T-cell (primary cell): ENCODE measurements at regions of chr10 and their contacts with region 1.

Region 1: DNA sequence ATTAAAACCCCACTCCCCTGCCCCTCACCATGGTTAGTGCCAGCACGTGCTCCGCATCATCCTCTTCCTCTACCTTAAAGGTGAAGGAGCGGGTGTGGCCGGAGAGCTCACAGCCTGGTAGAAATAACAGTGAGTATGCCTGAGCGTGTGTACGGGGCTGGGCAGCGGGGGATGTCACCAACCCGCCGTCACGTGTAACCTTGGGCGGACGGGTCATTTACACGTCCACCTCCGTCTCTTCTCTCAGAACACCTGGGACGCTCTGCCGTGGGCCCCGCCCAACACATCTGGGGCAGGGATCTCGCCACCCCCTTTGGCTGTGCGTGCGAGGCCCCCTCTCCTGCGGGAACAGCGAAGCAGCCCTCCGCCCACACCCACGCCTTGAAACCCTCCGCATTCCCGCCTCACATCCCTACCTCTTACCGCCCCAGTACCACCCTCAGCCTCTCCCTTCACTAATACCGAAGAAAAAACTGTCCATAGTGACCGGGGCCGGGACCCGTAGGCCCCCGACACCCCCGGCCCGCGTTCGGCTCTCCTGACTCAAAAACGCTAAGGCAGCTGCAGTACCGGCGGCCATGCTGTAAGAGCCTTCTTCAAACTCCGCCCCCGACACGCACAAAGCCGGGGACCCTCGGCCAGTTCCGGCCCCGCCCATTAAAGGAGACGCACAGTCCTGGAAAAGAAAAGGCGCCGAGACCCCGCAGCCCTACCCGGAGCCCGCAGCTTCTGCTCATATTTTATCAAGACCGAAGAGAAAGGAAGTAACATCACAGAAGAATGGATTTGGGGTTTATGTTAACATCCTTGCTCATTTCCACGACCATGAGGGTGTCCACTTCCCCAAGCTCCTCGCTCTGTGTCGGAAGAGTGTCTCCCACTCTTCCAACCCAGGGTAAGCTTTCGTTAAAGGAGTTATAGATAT is at the start of gene NPM3:
- DNase-seq: peak; percentile 59 to 83 (median 75)
- ATAC-seq: peak; percentile 78 to 80 (median 79)
- H3K4me3 ChIP-seq: peak within 1 kb of the TSS; percentile 67 to 95
- H3K4me3 Mint-ChIP-seq: peak within 1 kb of the TSS; percentile 97 to 100 (median 100)
- H3K27ac ChIP-seq: peak within 1 kb of the TSS; percentile 68
- H3K27ac Mint-ChIP-seq: peak within 1 kb of the TSS; percentile 94
- H3K4me1 ChIP-seq: peaks cover 27 to 55% of the 10 kb centered on the region in 2 experiments
- H3K4me1 Mint-ChIP-seq: peaks cover 63 to 73% (median 71%) of the 10 kb centered on the region in 3 donors
- H3K27me3 ChIP-seq: peaks cover 3 to 24% of the 10 kb centered on the region in 2 experiments
- H3K27me3 Mint-ChIP-seq: peaks cover 9% of the 10 kb centered on the region in 2 donors
- total RNA-seq, gene NPM3: 13.1 to 29.7 (median 26.0) TPM

Region 2: DNA sequence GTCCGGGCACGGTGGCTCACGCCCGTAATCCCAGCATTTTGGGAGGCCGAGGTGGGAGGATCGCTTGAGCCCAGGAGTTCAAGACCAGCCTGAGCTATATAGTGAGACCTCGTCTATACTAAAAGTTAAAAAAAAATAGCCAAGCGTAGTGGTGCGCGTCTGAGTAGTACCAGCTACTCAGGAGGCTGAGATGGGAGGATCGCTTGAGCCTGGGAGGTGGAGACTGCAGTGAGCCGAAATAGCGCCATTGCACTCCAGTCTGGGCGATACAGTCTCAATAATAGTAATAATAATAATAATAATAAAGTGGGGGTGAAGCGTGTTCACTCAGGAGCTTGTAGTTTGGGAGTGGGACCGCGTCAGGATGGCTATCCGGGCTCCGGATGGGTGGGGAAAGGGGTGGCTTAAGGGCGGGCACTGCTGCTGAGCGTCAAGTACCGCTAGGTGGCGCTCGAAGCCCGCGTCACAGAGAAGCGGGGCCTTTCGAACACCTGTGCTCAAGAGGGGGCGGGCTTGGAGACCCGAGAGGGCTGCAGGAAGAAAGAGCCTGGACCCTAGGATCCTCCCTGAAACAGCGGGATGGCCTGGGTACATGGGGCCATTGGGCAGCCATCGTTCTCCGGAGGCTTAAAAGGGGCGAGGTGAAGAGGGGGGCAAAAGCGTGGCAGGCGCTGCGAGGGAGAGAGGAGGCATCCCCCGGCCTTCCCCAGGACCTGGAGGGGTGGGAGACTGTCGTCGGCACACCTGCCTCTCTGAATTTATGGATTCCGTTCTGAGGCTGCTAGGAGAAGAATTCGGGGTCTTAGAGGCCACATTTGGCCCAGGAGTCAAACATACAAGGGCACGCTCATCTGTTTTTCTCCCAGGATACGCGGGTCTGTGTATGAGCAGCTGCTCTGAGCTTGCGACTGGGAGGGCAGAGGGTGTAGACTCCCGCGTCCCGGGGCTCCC is 568.4 kb before region 1 on chr10:
- CTCF ChIA-PET with region 1: interaction called in 1 of 2 experiments, 14 read pairs
- POLR2A ChIA-PET with region 1: no interaction called
- DNase-seq: peak; percentile 19 to 87 (median 64)
- ATAC-seq: peak; percentile 79 to 87 (median 81)
- H3K4me3 ChIP-seq: peak overlapping the region in 1 of 2 donors; percentile 17
- H3K4me3 Mint-ChIP-seq: peak overlapping the region; percentile 49 to 70 (median 55)
- H3K27ac ChIP-seq: no peak overlapping the region
- H3K27ac Mint-ChIP-seq: peak overlapping the region in 1 of 2 donors; percentile 66
- H3K4me1 ChIP-seq: peaks cover 5 to 53% of the 10 kb centered on the region in 2 experiments
- H3K4me1 Mint-ChIP-seq: peaks cover 37 to 41% (median 40%) of the 10 kb centered on the region in 3 donors
- H3K27me3 ChIP-seq: peaks cover 26 to 95% of the 10 kb centered on the region in 2 experiments
- H3K27me3 Mint-ChIP-seq: peaks cover 68 to 92% of the 10 kb centered on the region in 2 donors

Region 3: DNA sequence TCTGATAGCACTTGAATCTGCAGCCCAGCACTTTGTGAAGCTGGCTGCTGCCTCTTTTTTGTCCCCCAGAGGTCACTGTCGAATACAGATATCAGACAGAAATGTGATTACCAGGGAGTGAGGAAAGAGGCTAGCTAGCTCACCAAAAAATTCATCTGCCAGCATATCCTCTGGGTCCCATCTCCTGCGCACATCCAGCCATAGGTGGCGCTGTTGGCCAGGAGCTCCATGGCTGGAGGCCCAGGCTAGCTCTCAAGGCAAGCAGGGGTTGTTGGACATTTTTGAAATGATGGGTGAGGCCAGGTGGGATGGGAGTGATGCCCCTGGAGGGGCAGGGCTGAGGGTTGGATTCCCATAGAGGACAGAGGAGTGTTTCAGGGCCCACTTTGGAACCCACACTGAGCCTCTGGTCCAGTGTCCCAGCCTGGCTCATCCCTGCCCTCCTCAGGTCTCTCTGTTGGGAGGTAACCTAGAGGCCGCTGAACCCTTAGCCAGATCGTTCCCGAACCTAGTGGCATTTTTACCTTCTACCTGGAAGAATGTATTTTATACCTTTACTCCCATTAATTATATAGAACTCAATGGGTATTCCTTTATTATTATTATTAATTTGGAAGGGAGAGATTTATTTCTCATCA is 180.2 kb before region 1 on chr10:
- CTCF ChIA-PET with region 1: interaction called in 1 of 2 experiments, 12 read pairs
- POLR2A ChIA-PET with region 1: no interaction called
- DNase-seq: peak in 32 of 35 experiments; percentile 13 to 67 (median 42)
- ATAC-seq: peak; percentile 52 to 79 (median 68)
- H3K4me3 ChIP-seq: no peak overlapping the region
- H3K4me3 Mint-ChIP-seq: no peak overlapping the region
- H3K27ac ChIP-seq: no peak overlapping the region
- H3K27ac Mint-ChIP-seq: no peak overlapping the region
- H3K4me1 ChIP-seq: no peaks in the 10 kb centered on the region
- H3K4me1 Mint-ChIP-seq: no peaks in the 10 kb centered on the region
- H3K27me3 ChIP-seq: no peaks in the 10 kb centered on the region
- H3K27me3 Mint-ChIP-seq: no peaks in the 10 kb centered on the region

Region 4: DNA sequence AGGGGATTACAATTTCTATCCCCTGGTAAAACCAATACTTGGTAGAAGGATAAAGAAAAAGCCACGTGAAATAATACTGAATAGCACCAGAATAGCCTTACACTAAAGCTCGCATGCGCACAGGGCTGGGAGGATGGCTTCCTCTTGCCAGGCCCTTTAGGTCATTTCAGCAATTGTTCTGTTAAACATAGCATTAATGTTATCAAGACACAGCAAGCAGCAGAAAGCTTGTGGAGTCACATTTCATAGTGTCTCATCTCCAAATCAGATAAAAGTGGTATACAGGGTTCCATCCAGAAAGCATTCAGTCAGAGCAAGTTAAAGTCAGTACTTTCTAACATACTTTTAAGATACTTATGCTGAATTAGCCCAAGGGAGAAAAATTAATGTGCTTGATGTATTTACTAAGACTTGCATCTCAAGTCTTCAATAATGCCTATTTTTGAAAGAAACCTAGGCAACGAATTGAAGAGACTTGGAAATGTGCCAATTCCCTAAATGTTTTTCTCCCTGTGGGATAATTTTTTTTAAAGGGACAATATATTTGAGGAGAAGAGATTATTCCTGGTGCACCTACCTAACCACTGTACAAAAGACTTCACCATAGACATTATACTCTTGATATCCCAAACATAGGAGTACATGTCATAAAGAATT is 14.5 kb after region 1 on chr10:
- CTCF ChIA-PET with region 1: interaction called, 4 to 11 read pairs
- POLR2A ChIA-PET with region 1: interaction called, 6 to 10 read pairs
- DNase-seq: no peak
- ATAC-seq: no peak
- H3K4me3 ChIP-seq: no peak overlapping the region
- H3K4me3 Mint-ChIP-seq: no peak overlapping the region
- H3K27ac ChIP-seq: no peak overlapping the region
- H3K27ac Mint-ChIP-seq: no peak overlapping the region
- H3K4me1 ChIP-seq: peaks cover 0 to 15% of the 10 kb centered on the region in 2 experiments
- H3K4me1 Mint-ChIP-seq: peaks cover 38 to 48% (median 41%) of the 10 kb centered on the region in 3 donors
- H3K27me3 ChIP-seq: no peaks in the 10 kb centered on the region
- H3K27me3 Mint-ChIP-seq: no peaks in the 10 kb centered on the region

Region 5: GRCh38 chr10:101807158-101807557 is 24.1 kb after region 1 on chr10:
- CTCF ChIA-PET with region 1: interaction called in 1 of 2 experiments, 12 read pairs
- POLR2A ChIA-PET with region 1: no interaction called
- DNase-seq: no peak
- ATAC-seq: no peak
- H3K4me3 ChIP-seq: no peak overlapping the region
- H3K4me3 Mint-ChIP-seq: no peak overlapping the region
- H3K27ac ChIP-seq: no peak overlapping the region
- H3K27ac Mint-ChIP-seq: peak overlapping the region in 1 of 2 donors; percentile 36
- H3K4me1 ChIP-seq: peaks cover 0 to 8% of the 10 kb centered on the region in 2 experiments
- H3K4me1 Mint-ChIP-seq: peaks cover 10 to 41% (median 39%) of the 10 kb centered on the region in 3 donors
- H3K27me3 ChIP-seq: no peaks in the 10 kb centered on the region
- H3K27me3 Mint-ChIP-seq: no peaks in the 10 kb centered on the region

Region 6: DNA sequence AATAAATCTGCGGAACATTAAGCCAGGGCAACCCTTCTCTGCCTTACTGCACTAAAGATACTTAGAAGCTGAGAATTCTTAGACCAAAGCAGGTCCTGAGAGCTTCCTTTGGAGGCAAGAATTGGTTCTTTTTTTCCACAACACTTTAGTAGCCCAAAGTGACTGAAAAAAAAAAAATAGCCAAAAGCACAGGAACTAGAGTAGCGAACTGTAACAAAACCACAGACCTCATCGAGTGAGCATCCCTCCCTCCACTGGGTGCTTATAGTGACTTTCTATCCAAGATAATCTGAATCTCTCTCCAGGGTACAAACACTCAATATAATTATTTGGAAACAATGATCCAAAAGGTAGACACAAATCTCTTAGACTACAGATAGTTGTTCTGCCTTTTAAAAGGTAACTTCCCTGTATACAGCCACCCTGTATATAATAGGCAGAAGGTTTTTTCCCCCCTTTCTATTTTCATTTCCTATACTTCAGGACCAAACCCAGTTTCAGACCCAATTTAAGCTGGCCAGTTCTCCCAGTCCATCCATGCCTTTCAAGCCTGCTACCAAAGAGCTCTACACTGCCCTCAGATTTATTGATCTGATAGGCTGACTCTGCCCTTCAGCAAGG is 92.1 kb after region 1 on chr10:
- CTCF ChIA-PET with region 1: no interaction called
- POLR2A ChIA-PET with region 1: no interaction called
- DNase-seq: no peak
- ATAC-seq: no peak
- H3K4me3 ChIP-seq: no peak overlapping the region
- H3K4me3 Mint-ChIP-seq: no peak overlapping the region
- H3K27ac ChIP-seq: no peak overlapping the region
- H3K27ac Mint-ChIP-seq: no peak overlapping the region
- H3K4me1 ChIP-seq: no peaks in the 10 kb centered on the region
- H3K4me1 Mint-ChIP-seq: peaks cover 14 to 21% (median 15%) of the 10 kb centered on the region in 3 donors
- H3K27me3 ChIP-seq: no peaks in the 10 kb centered on the region
- H3K27me3 Mint-ChIP-seq: no peaks in the 10 kb centered on the region